CD4-positive, alpha-beta T cell (primary cell): ENCODE measurements at regions of chr3 and their contacts with region 1.

Region 1: GRCh38 chr3:45037734-45038455 is 11.8 kb downstream of the CLEC3B start:
- DNase-seq: peak; percentile 86 to 96 (median 90)
- ATAC-seq: peak; percentile 94
- H3K4me3 ChIP-seq: no peak overlapping the region
- H3K4me3 Mint-ChIP-seq: peak overlapping the region; percentile 62
- H3K27ac ChIP-seq: no peak overlapping the region
- H3K27ac Mint-ChIP-seq: no peak overlapping the region
- H3K4me1 ChIP-seq: peaks cover 51% of the 10 kb centered on the region
- H3K4me1 Mint-ChIP-seq: peaks cover 56% of the 10 kb centered on the region
- H3K27me3 ChIP-seq: peaks cover 3 to 8% of the 10 kb centered on the region in 2 experiments
- H3K27me3 Mint-ChIP-seq: peaks cover 49% of the 10 kb centered on the region
- CTCF ChIP-seq: peak; percentile 91

Region 2: GRCh38 chr3:44529927-44530326 is 508.0 kb before region 1 on chr3:
- CTCF ChIA-PET with region 1: no interaction called
- POLR2A ChIA-PET with region 1: no interaction called
- intact Hi-C with region 1: loop called in 1 of 2 experiments (anchors 2 kb)
- DNase-seq: peak in 5 of 14 experiments; percentile 6 to 27 (median 19)
- ATAC-seq: no peak
- H3K4me3 ChIP-seq: no peak overlapping the region
- H3K4me3 Mint-ChIP-seq: no peak overlapping the region
- H3K27ac ChIP-seq: no peak overlapping the region
- H3K27ac Mint-ChIP-seq: no peak overlapping the region
- H3K4me1 ChIP-seq: no peaks in the 10 kb centered on the region
- H3K4me1 Mint-ChIP-seq: no peaks in the 10 kb centered on the region
- H3K27me3 ChIP-seq: peaks cover 4 to 10% of the 10 kb centered on the region in 2 experiments
- H3K27me3 Mint-ChIP-seq: peaks cover 36% of the 10 kb centered on the region
- CTCF ChIP-seq: no peak

Region 3: GRCh38 chr3:45167011-45167911 is 129.4 kb after region 1 on chr3:
- CTCF ChIA-PET with region 1: interaction called, 4 read pairs
- POLR2A ChIA-PET with region 1: no interaction called
- intact Hi-C with region 1: loop called in 1 of 2 experiments (anchors 2 kb)
- DNase-seq: peak; percentile 70 to 91 (median 82)
- ATAC-seq: peak; percentile 98
- H3K4me3 ChIP-seq: peak overlapping the region; percentile 12
- H3K4me3 Mint-ChIP-seq: peak overlapping the region; percentile 62
- H3K27ac ChIP-seq: peak overlapping the region; percentile 36 to 61
- H3K27ac Mint-ChIP-seq: peak overlapping the region; percentile 81
- H3K4me1 ChIP-seq: peaks cover 18% of the 10 kb centered on the region
- H3K4me1 Mint-ChIP-seq: peaks cover 28% of the 10 kb centered on the region
- H3K27me3 ChIP-seq: no peaks in the 10 kb centered on the region
- H3K27me3 Mint-ChIP-seq: no peaks in the 10 kb centered on the region
- CTCF ChIP-seq: no peak

Region 4: GRCh38 chr3:45333549-45333948 is 295.7 kb after region 1 on chr3:
- CTCF ChIA-PET with region 1: no interaction called
- POLR2A ChIA-PET with region 1: no interaction called
- intact Hi-C with region 1: loop called in 1 of 2 experiments (anchors 5 kb)
- DNase-seq: no peak
- ATAC-seq: no peak
- H3K4me3 ChIP-seq: no peak overlapping the region
- H3K4me3 Mint-ChIP-seq: no peak overlapping the region
- H3K27ac ChIP-seq: no peak overlapping the region
- H3K27ac Mint-ChIP-seq: no peak overlapping the region
- H3K4me1 ChIP-seq: peaks cover 4% of the 10 kb centered on the region
- H3K4me1 Mint-ChIP-seq: no peaks in the 10 kb centered on the region
- H3K27me3 ChIP-seq: peaks cover 0 to 23% of the 10 kb centered on the region in 2 experiments
- H3K27me3 Mint-ChIP-seq: peaks cover 28% of the 10 kb centered on the region
- CTCF ChIP-seq: no peak

Region 5: GRCh38 chr3:45593708-45594609 is 556.1 kb after region 1 on chr3:
- CTCF ChIA-PET with region 1: no interaction called
- POLR2A ChIA-PET with region 1: interaction called, 3 read pairs
- intact Hi-C with region 1: loop called in 1 of 2 experiments (anchors 5 kb)
- DNase-seq: peak; percentile 35 to 84 (median 63)
- ATAC-seq: peak; percentile 77
- H3K4me3 ChIP-seq: peak overlapping the region; percentile 81
- H3K4me3 Mint-ChIP-seq: peak overlapping the region; percentile 94
- H3K27ac ChIP-seq: peak overlapping the region; percentile 32 to 45
- H3K27ac Mint-ChIP-seq: peak overlapping the region; percentile 89
- H3K4me1 ChIP-seq: peaks cover 66% of the 10 kb centered on the region
- H3K4me1 Mint-ChIP-seq: peaks cover 57% of the 10 kb centered on the region
- H3K27me3 ChIP-seq: no peaks in the 10 kb centered on the region
- H3K27me3 Mint-ChIP-seq: no peaks in the 10 kb centered on the region
- CTCF ChIP-seq: no peak